WTC11 (cell line): ENCODE measurements at regions of chr15 and their contacts with region 1.

Region 1: DNA sequence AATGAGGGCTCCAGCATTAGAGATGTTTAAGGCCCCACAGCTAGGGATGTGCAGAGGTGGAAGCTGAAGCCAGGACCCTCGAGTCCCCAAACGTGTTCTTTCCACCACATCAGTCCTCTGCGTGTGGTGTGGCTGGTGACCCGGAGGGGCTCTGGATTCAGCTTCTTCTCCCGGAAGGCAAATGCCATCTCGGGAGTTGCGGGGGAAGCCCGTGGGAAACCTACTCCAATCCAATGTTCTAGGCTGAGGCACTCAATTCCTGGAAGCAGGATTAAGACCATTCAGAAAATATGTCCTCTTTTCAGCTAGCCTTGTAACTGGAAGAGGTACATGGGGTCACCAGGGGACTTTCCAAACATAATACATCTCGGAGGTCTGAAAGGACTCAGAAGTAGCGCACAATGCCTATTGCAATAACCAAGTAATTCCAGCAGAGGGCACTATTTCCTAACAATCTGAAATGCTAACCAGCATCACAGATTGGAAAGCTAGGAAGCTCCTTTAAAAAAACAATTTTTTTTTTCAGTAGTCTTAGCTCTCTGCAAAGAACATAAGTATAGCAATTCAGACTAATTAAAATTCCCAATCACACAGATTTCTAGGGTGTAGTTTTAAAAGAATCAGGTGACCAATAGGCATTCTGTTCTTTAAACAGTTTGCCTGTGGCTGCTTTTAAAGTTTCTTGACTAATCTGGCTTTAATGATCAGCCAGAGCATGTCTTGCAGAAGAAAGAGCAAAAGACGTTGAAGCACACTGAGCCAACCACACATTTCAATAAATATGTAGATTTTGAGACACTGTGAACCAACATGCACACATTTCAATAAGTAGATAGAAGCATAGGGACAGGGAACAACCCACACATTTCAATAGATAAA is 36.1 kb downstream of the BNC1 start:
- DNase-seq: peak; percentile 20
- ATAC-seq: peak; percentile 85
- H3K4me3 Mint-ChIP-seq: no peak overlapping the region
- H3K27ac Mint-ChIP-seq: no peak overlapping the region
- H3K4me1 Mint-ChIP-seq: peaks cover 4% of the 10 kb centered on the region
- H3K27me3 Mint-ChIP-seq: peaks cover 16% of the 10 kb centered on the region
- CTCF ChIP-seq: peak; percentile 93

Region 2: DNA sequence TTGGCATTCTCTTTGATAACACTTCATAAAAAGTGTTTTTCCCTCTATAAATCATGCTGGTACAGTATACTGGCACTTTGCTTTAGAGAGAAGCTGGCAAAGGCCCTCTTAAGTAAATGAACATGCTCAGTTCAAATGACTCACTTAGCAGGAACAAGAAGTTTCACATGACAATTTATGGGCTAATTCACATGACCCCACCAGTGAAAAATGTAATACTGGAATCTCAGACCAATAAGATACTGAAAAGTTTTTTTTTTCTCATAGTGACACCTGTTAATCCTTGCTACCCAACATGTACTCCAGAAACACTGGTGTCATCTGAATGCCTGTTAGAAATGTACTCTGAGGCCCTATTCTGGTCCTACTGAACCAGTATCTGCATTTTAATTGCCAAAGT is 195.2 kb before region 1 on chr15:
- CTCF ChIA-PET with region 1: no interaction called
- POLR2A ChIA-PET with region 1: no interaction called
- DNase-seq: no peak
- ATAC-seq: no peak
- H3K4me3 Mint-ChIP-seq: no peak overlapping the region
- H3K27ac Mint-ChIP-seq: no peak overlapping the region
- H3K4me1 Mint-ChIP-seq: peaks cover 15% of the 10 kb centered on the region
- H3K27me3 Mint-ChIP-seq: no peaks in the 10 kb centered on the region
- CTCF ChIP-seq: no peak

Region 3: DNA sequence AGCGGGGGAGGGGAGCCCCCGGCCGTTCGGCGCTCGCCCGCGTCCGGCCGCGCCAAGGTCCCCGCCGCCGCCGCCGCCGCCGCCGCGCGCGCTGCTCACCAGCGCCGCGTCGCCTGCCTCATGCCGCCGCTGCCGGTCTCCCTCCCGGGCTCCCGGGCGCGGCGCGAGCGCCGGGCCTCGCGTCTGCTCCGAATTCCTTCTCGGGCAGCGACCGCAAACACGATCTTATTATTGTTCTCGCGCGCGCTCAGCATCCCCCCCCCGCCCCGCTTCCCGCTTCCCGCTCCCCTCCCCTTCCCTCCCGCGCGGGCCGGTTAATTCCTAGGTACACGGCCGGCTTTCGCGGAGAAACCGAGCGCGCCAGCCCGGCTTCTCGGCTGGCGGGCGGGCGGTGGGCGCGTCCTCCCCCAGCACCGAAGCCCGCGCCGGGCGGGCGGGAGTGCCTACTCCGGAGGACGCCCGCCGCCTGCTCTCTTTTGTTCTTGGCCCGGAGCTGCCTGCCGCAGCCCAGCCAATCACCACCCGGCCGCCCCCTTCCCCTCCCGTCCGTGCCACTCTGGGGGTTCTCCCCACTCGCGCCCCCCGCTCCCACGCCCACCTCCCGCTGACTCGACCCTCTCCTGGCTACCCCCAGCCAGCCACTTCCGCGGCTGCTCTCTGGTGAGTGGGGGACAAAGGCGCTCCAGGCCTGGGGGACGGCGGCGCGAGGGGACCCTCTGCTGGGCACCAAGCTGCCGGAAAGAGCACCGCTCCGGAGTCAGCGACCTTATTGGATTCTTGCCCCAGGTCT is 40.6 kb before region 1 on chr15 and contains the start of gene HDGFL3:
- CTCF ChIA-PET with region 1: interaction called, 14 read pairs
- POLR2A ChIA-PET with region 1: interaction called, 3 read pairs
- DNase-seq: peak; percentile 60
- ATAC-seq: peak; percentile 78
- H3K4me3 Mint-ChIP-seq: peak within 1 kb of the TSS; percentile 95
- H3K27ac Mint-ChIP-seq: peak within 1 kb of the TSS; percentile 96
- H3K4me1 Mint-ChIP-seq: peaks cover 31% of the 10 kb centered on the region
- H3K27me3 Mint-ChIP-seq: no peaks in the 10 kb centered on the region
- CTCF ChIP-seq: no peak
- total RNA-seq, gene HDGFL3: 117 to 126 TPM (median 124 TPM) in 3 replicates

Region 4: DNA sequence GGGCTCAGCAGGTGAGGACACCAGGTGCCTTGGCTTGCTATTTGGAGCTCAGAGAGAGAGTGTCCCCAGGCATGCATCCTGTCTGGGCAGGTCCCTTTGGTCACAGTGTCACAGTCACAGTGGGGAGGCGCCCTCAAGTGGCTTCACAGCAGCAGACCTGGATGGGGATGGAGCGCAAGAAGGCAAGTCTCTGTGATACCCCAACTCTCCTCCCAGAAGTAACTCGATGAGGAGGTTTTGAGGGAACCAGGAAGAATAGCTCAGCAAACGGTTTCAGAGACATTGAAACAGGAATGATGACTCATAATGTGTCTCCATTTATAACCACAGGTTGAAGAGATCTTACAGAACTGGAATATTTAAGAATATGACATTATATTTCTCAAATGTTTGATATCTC is 132.3 kb after region 1 on chr15:
- CTCF ChIA-PET with region 1: interaction called, 23 read pairs
- POLR2A ChIA-PET with region 1: no interaction called
- DNase-seq: peak; percentile 34
- ATAC-seq: peak; percentile 7; the same call in 1 of the 2 replicates
- H3K4me3 Mint-ChIP-seq: no peak overlapping the region
- H3K27ac Mint-ChIP-seq: no peak overlapping the region
- H3K4me1 Mint-ChIP-seq: peaks cover 28% of the 10 kb centered on the region
- H3K27me3 Mint-ChIP-seq: peaks cover 37% of the 10 kb centered on the region
- CTCF ChIP-seq: no peak

Region 5: GRCh38 chr15:83422081-83422480 is 173.7 kb after region 1 on chr15:
- CTCF ChIA-PET with region 1: interaction called, 11 read pairs
- POLR2A ChIA-PET with region 1: no interaction called
- DNase-seq: no peak
- ATAC-seq: no peak
- H3K4me3 Mint-ChIP-seq: no peak overlapping the region
- H3K27ac Mint-ChIP-seq: no peak overlapping the region
- H3K4me1 Mint-ChIP-seq: no peaks in the 10 kb centered on the region
- H3K27me3 Mint-ChIP-seq: peaks cover 4% of the 10 kb centered on the region; the same call in 1 of the 2 replicates
- CTCF ChIP-seq: no peak

Region 6: DNA sequence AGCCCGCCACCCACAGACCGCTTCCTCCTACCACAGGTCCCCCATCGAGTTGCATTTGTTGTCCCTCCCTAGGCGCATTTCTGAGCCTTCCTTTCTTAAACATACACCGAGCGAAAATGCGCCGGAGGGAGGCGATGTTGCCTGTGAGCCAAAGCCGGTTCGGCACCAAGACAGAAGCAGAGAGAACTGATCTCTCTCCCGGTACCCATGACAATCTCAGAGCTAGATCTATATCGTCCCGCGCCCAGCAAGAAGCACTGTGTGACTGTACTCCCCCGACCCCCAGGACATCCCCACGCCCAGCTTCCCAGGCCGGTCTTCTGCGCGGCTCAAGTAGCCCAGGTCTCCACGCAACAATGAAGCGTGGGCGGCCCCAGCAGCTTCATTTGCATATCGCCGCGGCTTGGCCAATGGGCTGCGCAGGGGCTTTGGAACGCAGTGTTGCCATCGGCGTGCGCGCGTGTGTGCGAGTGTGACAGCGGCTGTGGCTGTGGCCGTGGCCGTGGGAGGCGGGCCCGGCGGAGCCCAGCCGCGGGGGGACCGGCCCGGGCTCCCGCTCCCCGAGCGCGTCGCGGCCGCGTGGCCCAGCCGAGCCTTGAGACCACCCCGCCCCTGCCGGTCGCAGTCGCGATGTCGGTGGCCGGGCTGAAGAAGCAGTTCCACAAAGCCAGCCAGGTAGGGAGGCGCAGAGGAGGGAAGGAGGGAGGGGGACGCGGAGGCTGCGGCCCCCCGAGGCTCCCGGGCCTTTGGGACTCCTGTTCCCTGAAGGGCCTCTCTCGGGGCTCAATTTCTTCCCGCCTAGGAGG is 198.7 kb after region 1 on chr15 and contains the start of gene SH3GL3:
- CTCF ChIA-PET with region 1: interaction called, 45 read pairs
- POLR2A ChIA-PET with region 1: no interaction called
- DNase-seq: peak; percentile 79
- ATAC-seq: peak; percentile 77
- H3K4me3 Mint-ChIP-seq: peak within 1 kb of the TSS; percentile 88
- H3K27ac Mint-ChIP-seq: 0 out of 2 replicates have a peak within 1 kb of the TSS, but pooled peaks have one; percentile 30
- H3K4me1 Mint-ChIP-seq: peaks cover 25% of the 10 kb centered on the region
- H3K27me3 Mint-ChIP-seq: peaks cover 21% of the 10 kb centered on the region
- CTCF ChIP-seq: no peak
- total RNA-seq, gene SH3GL3: 7.8 to 9.2 TPM (median 8.0 TPM) in 3 replicates

Region 7: GRCh38 chr15:83564975-83565532 is 316.7 kb after region 1 on chr15:
- CTCF ChIA-PET with region 1: interaction called, 24 read pairs
- POLR2A ChIA-PET with region 1: no interaction called
- DNase-seq: no peak
- ATAC-seq: no peak
- H3K4me3 Mint-ChIP-seq: no peak overlapping the region
- H3K27ac Mint-ChIP-seq: no peak overlapping the region
- H3K4me1 Mint-ChIP-seq: no peaks in the 10 kb centered on the region
- H3K27me3 Mint-ChIP-seq: no peaks in the 10 kb centered on the region
- CTCF ChIP-seq: no peak

Region 8: DNA sequence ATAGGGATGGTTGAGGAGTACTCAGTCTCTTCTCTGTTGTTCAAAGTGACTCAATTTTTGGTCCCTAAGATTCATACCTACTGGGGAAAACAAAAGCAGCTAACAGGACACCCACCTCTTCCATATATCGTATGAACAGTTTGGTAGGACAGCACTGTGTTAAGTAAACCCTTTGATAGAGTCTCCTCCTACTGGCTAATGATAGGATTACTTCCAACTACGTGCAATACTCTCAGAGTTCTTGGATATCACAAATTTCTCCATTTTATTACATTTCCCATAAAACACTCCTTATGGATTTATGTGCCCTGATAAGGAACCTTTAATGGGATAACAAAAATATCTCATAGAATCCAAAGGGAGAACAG is 787.0 kb after region 1 on chr15:
- CTCF ChIA-PET with region 1: interaction called, 11 read pairs
- POLR2A ChIA-PET with region 1: no interaction called
- DNase-seq: no peak
- ATAC-seq: peak; percentile 87
- H3K4me3 Mint-ChIP-seq: no peak overlapping the region
- H3K27ac Mint-ChIP-seq: no peak overlapping the region
- H3K4me1 Mint-ChIP-seq: no peaks in the 10 kb centered on the region
- H3K27me3 Mint-ChIP-seq: peaks cover 3% of the 10 kb centered on the region
- CTCF ChIP-seq: no peak; the same call in 1 of the 2 replicates